Activated CD4-positive, alpha-beta T cell treated with anti-CD3 and anti-CD28 coated beads, Interleukin-2, amount 10 ng/mL, durations not matched to agents 24 days and 14 days (primary cell): ENCODE measurements at regions of chr10 and their contacts with region 1.

Region 1: GRCh38 chr10:37976091-37976879 is at the start of gene ZNF25:
- DNase-seq: peak; percentile 98
- H3K4me3 Mint-ChIP-seq: peak within 1 kb of the TSS; percentile 95
- H3K27ac Mint-ChIP-seq: peak within 1 kb of the TSS; percentile 98
- H3K4me1 Mint-ChIP-seq: peaks cover 23% of the 10 kb centered on the region
- H3K27me3 Mint-ChIP-seq: no peaks in the 10 kb centered on the region
- total RNA-seq, gene ZNF25: 7.6 and 7.9 TPM in 2 replicates

Region 2: DNA sequence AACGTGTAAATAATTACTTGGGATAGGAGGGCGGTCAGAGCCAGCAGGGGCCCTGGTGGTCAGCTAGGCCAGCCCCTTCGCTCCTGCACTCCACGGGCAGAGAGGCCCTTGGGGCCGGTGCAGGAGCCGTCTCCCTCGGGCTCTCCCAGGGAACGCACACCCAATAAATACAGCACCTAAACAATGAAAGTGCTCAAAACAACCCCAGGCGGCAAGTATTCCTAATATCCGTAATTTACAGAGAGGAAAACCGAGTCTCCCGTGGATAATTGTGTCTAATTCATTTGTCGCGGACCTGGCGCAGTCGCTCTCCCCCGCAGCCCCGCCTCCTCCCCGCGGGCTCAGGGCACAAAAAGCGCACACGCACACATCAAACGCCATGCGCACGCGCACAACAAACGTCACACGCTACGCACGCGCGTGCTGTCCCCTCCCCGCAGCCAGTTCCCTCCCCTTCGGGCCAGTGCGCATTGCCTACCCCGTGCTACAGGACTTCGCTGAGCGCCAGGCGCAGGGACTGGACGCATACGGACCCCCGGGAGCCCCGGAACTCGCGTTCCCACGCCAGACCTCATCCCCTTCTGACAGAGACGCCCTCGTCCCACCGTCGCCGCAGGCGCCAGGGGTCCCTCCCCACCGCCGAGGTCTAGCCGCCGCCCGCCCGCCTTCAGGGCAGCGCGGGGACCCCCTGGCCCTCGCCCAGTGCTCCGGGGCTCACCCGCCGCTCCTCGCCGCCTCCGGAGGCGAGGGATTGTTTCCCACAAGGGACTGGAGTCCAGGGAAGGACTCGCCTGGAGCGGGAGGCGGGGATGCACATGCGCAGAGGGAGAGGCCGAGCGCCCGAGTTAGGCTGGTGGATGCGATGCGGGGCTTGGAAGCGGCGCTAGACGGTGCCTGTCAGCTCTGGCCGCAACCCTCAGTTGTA is 118.7 kb before region 1 on chr10 and contains the start of gene ZNF248:
- intact Hi-C with region 1: loop called (anchors 1 kb)
- DNase-seq: peak; percentile 99
- H3K4me3 Mint-ChIP-seq: peak within 1 kb of the TSS; percentile 89
- H3K27ac Mint-ChIP-seq: peak within 1 kb of the TSS; percentile 85
- H3K4me1 Mint-ChIP-seq: peaks cover 27% of the 10 kb centered on the region
- H3K27me3 Mint-ChIP-seq: no peaks in the 10 kb centered on the region
- total RNA-seq, gene ZNF248: 7.9 and 9.3 TPM in 2 replicates

Region 3: DNA sequence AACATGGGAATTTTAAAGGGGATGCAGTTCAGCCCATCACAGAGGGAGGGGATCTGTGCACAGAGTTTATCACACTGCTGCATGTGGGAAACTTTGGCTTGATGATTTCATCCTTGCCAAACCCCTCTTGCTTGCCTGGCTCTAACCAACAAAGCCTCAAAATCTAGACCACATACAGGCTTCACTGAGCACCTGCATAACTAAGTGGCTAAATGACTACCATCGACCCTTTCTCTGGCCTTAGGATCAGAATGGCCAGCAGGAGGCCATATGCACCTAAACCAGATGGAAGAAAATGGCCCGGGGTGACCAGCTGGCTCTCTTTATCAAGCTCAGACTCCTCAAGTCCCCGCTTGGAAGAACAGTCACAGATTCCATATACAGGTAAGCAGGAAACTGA is 15.8 kb after region 1 on chr10:
- intact Hi-C with region 1: no loop called
- DNase-seq: no peak
- H3K4me3 Mint-ChIP-seq: no peak overlapping the region
- H3K27ac Mint-ChIP-seq: no peak overlapping the region
- H3K4me1 Mint-ChIP-seq: no peaks in the 10 kb centered on the region
- H3K27me3 Mint-ChIP-seq: no peaks in the 10 kb centered on the region